HEK293 (cell line): ENCODE measurements at regions of chr3 and their contacts with region 1.

Region 1: DNA sequence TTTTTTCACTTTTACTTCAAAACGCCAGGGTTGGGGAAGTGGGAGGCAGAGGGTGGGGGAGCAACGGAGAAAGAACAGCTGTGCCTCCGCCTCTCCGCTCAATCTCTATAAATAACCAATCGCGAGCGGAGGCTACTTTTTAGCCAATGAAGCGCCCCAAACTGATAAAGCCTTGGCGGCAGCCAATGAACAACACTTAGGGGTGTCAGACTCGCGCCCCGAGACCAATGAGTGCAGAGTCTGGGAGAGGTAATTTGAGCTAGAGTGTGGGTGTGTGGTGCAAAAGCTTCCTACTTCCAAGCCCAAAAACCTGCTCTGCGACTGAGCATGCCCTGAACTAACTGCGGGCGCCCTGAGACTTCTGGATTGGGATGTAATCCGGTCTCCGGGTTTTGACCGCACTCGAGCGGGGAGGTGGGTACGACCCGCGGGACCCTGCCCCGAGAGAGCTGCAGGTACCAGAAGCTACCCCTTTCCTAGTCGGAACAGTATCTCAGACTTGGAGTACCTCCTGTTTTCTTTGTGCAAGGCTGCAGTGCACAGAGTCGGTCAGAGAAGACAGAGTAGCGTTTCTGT is 800 bp upstream of the RAP2B start:
- H3K4me3 ChIP-seq: peak overlapping the region; percentile 64
- H3K27ac ChIP-seq: peak overlapping the region; percentile 82
- H3K4me1 ChIP-seq: no peaks in the 10 kb centered on the region
- CTCF ChIP-seq: no peak

Region 2: GRCh38 chr3:153043729-153044328 is 117.4 kb before region 1 on chr3:
- CTCF ChIA-PET with region 1: interaction called, 4 read pairs
- POLR2A ChIA-PET with region 1: interaction called, 16 read pairs
- H3K4me3 ChIP-seq: no peak overlapping the region
- H3K27ac ChIP-seq: no peak overlapping the region
- H3K4me1 ChIP-seq: no peaks in the 10 kb centered on the region
- CTCF ChIP-seq: no peak

Region 3: GRCh38 chr3:153138276-153139210 is 22.7 kb before region 1 on chr3:
- CTCF ChIA-PET with region 1: interaction called, 3 read pairs
- POLR2A ChIA-PET with region 1: interaction called, 10 read pairs
- H3K4me3 ChIP-seq: no peak overlapping the region
- H3K27ac ChIP-seq: no peak overlapping the region
- H3K4me1 ChIP-seq: 0 out of 2 replicates have a peak, but pooled peaks cover 2% of the 10 kb centered on the region
- CTCF ChIP-seq: no peak

Region 4: GRCh38 chr3:153192327-153192726 is 31.1 kb after region 1 on chr3:
- CTCF ChIA-PET with region 1: no interaction called
- POLR2A ChIA-PET with region 1: no interaction called
- H3K4me3 ChIP-seq: no peak overlapping the region
- H3K27ac ChIP-seq: no peak overlapping the region
- H3K4me1 ChIP-seq: no peaks in the 10 kb centered on the region
- CTCF ChIP-seq: no peak